Activated CD8-positive, alpha-beta T cell treated with anti-CD3 and anti-CD28 coated beads for 36 hours (primary cell): ENCODE measurements at regions of chr15 and their contacts with region 1.

Region 1: GRCh38 chr15:75453703-75454470 is 2.4 kb upstream of the SIN3A start:
- DNase-seq: peak; percentile 98
- ATAC-seq: peak; percentile 41
- H3K4me3 Mint-ChIP-seq: peak overlapping the region; percentile 96
- H3K27ac Mint-ChIP-seq: peak overlapping the region; percentile 100
- H3K4me1 Mint-ChIP-seq: peaks cover 18% of the 10 kb centered on the region
- H3K27me3 Mint-ChIP-seq: no peaks in the 10 kb centered on the region
- CTCF ChIP-seq: no peak

Region 2: GRCh38 chr15:75302318-75302717 is 151.6 kb before region 1 on chr15:
- CTCF ChIA-PET with region 1: no interaction called
- POLR2A ChIA-PET with region 1: no interaction called
- intact Hi-C with region 1: no loop called
- DNase-seq: no peak
- ATAC-seq: no peak
- H3K4me3 Mint-ChIP-seq: no peak overlapping the region
- H3K27ac Mint-ChIP-seq: no peak overlapping the region
- H3K4me1 Mint-ChIP-seq: no peaks in the 10 kb centered on the region
- H3K27me3 Mint-ChIP-seq: peaks cover 7% of the 10 kb centered on the region
- CTCF ChIP-seq: no peak

Region 3: GRCh38 chr15:75468913-75469598 is 15.2 kb after region 1 on chr15:
- CTCF ChIA-PET with region 1: no interaction called
- POLR2A ChIA-PET with region 1: interaction called, 31 read pairs
- intact Hi-C with region 1: no loop called
- DNase-seq: no peak
- ATAC-seq: no peak
- H3K4me3 Mint-ChIP-seq: no peak overlapping the region
- H3K27ac Mint-ChIP-seq: peak overlapping the region; percentile 53
- H3K4me1 Mint-ChIP-seq: no peaks in the 10 kb centered on the region
- H3K27me3 Mint-ChIP-seq: no peaks in the 10 kb centered on the region
- CTCF ChIP-seq: no peak

Region 4: DNA sequence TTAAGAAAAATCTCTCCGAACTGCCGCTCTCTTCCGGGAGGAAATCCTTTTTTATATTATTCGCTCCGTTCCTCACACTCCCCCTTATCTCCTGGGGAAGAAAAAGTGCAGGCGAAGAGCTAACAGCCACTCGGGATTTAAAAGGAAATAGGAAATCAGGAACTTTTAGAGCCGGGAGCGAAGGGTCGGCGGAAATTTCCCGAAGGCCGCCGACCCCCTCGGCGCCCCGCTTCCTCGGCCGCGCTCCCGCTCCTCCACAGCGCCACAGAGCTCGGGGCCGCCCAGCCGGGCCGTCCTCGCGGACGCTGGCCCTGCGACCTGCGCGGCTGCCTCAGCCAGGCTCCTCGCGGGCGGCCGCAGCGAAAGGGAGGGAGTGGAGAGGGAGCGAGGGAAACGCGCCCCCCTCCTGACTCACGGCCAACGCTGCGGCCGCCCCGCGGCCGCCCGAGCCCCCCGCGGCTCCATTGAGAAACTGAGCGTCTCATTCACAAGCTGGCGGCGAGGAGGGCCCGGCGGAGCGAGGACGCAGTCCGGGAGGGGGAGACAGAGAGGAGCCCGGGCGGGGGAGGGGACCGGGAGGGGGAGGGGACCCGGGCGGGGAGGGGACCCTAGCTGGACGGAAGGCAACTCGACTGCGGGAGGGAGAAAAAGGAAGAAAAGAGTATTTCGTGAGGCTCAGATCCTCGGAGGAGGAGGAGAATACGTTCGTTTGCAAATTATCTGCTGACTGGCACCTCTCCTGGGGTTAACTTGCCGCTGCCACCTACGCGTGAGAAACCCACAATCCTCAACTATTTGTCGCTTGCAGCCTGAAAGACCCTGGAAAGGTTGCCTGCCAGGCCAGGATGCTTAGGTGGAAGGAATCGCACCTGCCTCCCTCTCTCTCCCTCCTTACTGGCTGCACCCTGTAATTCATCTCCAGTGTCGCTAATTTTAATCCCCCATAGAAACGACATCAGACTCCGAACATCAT is 125.3 kb after region 1 on chr15 and contains the start of gene PTPN9:
- CTCF ChIA-PET with region 1: interaction called, 5 read pairs
- POLR2A ChIA-PET with region 1: interaction called, 10 read pairs
- intact Hi-C with region 1: no loop called
- DNase-seq: peak; percentile 79
- ATAC-seq: peak; percentile 89
- H3K4me3 Mint-ChIP-seq: peak within 1 kb of the TSS; percentile 88
- H3K27ac Mint-ChIP-seq: peak within 1 kb of the TSS; percentile 91
- H3K4me1 Mint-ChIP-seq: peaks cover 18% of the 10 kb centered on the region
- H3K27me3 Mint-ChIP-seq: no peaks in the 10 kb centered on the region
- CTCF ChIP-seq: peak; percentile 71
- total RNA-seq, gene PTPN9: 12.3 to 12.9 TPM

Region 5: DNA sequence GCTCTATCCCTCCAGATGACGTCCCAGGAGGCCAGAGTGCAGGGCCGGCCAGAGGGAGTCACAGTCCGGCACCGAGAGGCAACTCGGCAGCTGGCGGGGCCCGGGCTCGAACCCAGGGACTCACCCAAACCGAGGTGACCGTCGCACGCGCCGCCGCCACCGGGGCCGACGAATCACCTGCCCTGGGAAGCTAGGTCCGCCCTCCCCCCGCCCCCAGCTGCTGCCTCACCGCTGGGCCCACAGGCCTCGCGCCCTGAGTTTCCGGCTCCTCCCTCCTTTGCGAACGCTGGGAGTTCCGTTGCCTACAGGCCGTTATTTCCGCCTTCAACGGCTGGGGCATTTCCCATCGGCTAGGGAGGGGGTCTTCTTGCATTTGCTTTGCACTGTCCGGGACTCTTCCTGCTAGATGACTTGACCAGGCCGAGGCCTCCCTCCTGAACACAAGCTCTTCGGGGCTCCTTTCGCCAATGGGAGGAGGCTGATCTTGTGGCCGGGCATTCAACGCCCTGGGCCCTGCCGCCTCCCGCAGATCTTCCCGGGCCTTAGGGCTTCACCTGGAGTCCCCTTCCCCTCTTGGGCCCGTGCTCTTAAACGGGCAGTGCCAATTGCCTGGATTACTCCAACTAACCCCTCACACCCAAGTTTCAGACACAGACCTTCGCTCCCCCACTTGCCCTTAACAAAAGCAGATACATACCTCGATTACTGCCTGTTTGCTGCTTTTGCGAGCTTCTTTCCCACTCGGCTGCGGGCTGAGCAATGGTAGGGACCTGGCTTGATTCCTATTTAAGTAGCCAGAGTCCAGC is 171.9 kb after region 1 on chr15 and contains the start of gene SNUPN:
- CTCF ChIA-PET with region 1: interaction called, 4 read pairs
- POLR2A ChIA-PET with region 1: interaction called, 28 read pairs
- intact Hi-C with region 1: no loop called
- DNase-seq: peak; percentile 97
- ATAC-seq: peak; percentile 91
- H3K4me3 Mint-ChIP-seq: peak within 1 kb of the TSS; percentile 94
- H3K27ac Mint-ChIP-seq: peak within 1 kb of the TSS; percentile 98
- H3K4me1 Mint-ChIP-seq: peaks cover 36% of the 10 kb centered on the region
- H3K27me3 Mint-ChIP-seq: no peaks in the 10 kb centered on the region
- CTCF ChIP-seq: no peak
- total RNA-seq, gene SNUPN: 28.2 to 28.5 TPM